SK-N-SH (cell line): ENCODE measurements at regions of chr16 and their contacts with region 1.

Region 1: DNA sequence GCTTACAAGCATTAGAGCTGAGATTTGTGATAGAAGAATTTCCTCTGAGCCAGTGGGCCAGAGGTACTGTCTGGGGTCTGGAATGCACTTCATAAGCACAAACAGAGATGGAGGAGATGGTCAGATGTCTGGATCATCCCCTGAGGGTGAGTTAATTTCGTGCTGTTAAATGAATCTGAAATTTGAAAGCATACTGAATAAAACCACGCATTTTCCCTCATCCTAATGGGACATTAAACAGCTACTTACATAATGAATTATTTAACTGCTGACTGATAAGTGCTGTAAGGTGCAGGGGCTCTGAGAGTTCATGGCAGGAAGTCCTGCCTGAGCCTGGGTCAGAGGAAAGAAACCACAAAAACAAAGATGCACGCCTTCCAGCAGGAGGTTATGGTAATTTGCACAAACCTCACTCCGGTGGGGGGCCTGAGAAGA is 136.3 kb upstream of the XYLT1 start:
- DNase-seq: peak; percentile 47
- H3K4me3 ChIP-seq: no peak overlapping the region
- H3K27ac ChIP-seq: peak overlapping the region in 1 of 2 experiments; percentile 99; a peak in 2 of 4 replicates
- H3K4me1 ChIP-seq: peaks cover 5 to 26% of the 10 kb centered on the region in 2 experiments; a peak in 3 of 4 replicates
- H3K27me3 ChIP-seq: no peaks in the 10 kb centered on the region
- CTCF ChIP-seq: no peak
- EP300 ChIP-seq: peak in 1 of 2 experiments; percentile 96; a peak in 2 of 4 replicates
- RAD21 ChIP-seq: peak; percentile 38

Region 2: DNA sequence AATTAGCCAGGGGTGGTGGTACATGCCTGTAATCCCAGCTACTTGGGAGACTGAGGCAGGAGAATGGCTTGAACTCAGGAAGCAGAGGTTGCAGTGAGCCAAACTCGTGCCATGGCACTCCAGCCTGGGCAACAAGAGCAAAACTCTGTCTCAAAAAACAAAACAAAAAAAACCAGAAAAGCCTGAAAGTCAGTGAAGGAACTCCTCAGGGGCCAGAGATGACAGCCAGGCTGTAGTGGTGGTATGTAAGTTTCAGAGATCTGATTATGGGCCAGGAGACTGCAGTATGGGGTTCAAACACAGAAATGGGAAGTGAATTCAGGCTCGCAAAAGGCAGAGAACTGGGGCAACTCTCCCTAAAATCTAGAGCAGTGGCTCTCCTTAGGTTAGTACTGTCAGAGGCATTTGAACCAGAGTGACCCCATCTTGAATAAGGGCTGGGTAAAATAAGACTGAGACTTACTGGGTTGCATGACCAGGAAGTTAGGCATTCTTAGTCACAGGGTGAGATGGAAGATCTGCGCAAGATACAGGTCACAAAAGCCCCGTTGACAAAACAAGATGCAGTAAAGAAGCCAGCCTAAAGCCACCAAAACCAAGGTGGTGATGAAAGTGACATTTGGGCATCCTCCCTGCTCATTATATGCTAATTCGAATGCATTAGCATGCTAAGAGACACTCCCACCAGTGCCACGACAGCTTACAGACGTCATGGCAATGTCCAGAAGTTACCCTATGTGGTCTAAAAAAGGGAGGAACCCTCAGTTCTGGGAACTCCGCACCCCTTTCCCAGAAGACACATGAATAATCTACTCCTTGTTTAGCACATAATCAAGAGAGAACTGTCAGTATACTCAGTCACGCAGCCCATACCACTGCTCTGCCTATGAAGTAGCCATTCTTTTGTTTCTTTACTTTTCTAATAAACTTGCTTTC is 16.1 kb before region 1 on chr16:
- CTCF ChIA-PET with region 1: interaction called, 3 read pairs
- POLR2A ChIA-PET with region 1: interaction called, 11 read pairs
- DNase-seq: no peak
- H3K4me3 ChIP-seq: no peak overlapping the region
- H3K27ac ChIP-seq: peak overlapping the region; percentile 68 to 100
- H3K4me1 ChIP-seq: peaks cover 10 to 34% of the 10 kb centered on the region in 2 experiments
- H3K27me3 ChIP-seq: no peaks in the 10 kb centered on the region
- CTCF ChIP-seq: no peak
- EP300 ChIP-seq: no peak
- RAD21 ChIP-seq: no peak

Region 3: DNA sequence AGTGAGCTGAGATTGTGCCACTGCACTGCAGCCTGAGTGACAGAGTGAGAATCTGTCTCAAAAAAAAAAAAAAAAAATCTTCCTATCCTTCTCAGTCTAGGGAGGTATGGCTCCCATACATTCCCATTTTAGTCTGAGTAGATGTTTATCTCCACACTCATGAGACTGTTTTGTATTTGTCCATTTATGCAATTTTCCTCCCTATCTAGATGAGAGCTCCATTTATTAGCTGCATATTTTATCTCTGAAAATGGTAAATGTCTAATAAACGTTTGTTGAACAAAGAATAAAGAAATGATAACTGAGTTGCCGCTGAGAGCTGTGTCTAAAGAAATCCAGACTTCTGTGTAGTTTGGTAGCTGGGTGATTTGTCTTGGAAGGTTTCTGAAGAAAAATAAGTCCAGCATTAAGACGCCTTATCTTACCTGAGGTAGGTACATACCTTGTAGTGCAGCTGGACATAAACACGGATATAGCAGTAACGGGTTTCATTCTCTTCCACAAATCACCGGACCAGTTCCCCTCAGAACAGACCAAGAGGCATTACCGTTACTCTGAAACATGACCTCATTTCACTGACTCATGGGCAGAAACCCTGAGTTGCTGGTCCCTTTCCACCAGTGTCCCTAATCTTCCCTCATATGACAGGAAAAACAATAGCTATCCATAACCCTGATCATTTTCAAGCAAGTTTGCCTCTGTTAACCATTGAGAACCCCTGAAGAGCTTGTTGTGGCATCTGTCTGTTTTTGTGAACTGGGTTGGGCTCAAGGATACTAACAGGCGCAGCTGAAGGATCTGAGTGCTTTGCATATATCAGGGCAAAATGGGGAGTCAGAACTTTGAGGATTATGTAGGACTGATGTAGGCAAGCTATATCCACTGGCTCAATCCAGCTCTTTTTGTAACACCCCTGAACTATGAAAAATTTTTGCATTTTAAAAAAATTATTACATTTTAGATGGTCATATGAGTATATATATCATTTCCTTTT is 41.1 kb after region 1 on chr16:
- CTCF ChIA-PET with region 1: no interaction called
- POLR2A ChIA-PET with region 1: interaction called, 10 read pairs
- DNase-seq: peak; percentile 44
- H3K4me3 ChIP-seq: 0 out of 4 replicates have a peak overlapping the region, but pooled peaks of 1 of the 2 experiments have one; percentile 2
- H3K27ac ChIP-seq: peak overlapping the region in 1 of 2 experiments; percentile 97; a peak in 2 of 4 replicates
- H3K4me1 ChIP-seq: peaks cover 0 to 16% of the 10 kb centered on the region in 2 experiments; a peak in 2 of 4 replicates
- H3K27me3 ChIP-seq: no peaks in the 10 kb centered on the region
- CTCF ChIP-seq: no peak
- EP300 ChIP-seq: peak in 1 of 2 experiments; percentile 92; a peak in 2 of 4 replicates
- RAD21 ChIP-seq: peak; percentile 15; the same call in 1 of the 2 replicates

Region 4: GRCh38 chr16:17773698-17774101 is 166.6 kb after region 1 on chr16:
- CTCF ChIA-PET with region 1: interaction called, 7 read pairs
- POLR2A ChIA-PET with region 1: interaction called, 11 read pairs
- DNase-seq: peak; percentile 62
- H3K4me3 ChIP-seq: no peak overlapping the region
- H3K27ac ChIP-seq: peak overlapping the region; percentile 48 to 99; a peak in 3 of 4 replicates
- H3K4me1 ChIP-seq: peaks cover 10 to 29% of the 10 kb centered on the region in 2 experiments; a peak in 3 of 4 replicates
- H3K27me3 ChIP-seq: no peaks in the 10 kb centered on the region
- CTCF ChIP-seq: no peak
- EP300 ChIP-seq: peak in 1 of 2 experiments; percentile 87; a peak in 2 of 4 replicates
- RAD21 ChIP-seq: peak; percentile 33

Region 5: GRCh38 chr16:17972460-17972943 is 365.4 kb after region 1 on chr16:
- CTCF ChIA-PET with region 1: interaction called, 9 read pairs
- POLR2A ChIA-PET with region 1: interaction called, 10 read pairs
- DNase-seq: peak; percentile 88
- H3K4me3 ChIP-seq: no peak overlapping the region; a peak in 1 of 4 replicates
- H3K27ac ChIP-seq: peak overlapping the region in 1 of 2 experiments; percentile 100; a peak in 2 of 4 replicates
- H3K4me1 ChIP-seq: peaks cover 0 to 45% of the 10 kb centered on the region in 2 experiments; a peak in 2 of 4 replicates
- H3K27me3 ChIP-seq: no peaks in the 10 kb centered on the region; the same call in 1 of the 2 replicates
- CTCF ChIP-seq: no peak
- EP300 ChIP-seq: peak in 1 of 2 experiments; percentile 93; a peak in 2 of 4 replicates
- RAD21 ChIP-seq: no peak; the same call in 1 of the 2 replicates